OCI-LY7 (cell line): ENCODE measurements at regions of chr14 and their contacts with region 1.

Region 1: DNA sequence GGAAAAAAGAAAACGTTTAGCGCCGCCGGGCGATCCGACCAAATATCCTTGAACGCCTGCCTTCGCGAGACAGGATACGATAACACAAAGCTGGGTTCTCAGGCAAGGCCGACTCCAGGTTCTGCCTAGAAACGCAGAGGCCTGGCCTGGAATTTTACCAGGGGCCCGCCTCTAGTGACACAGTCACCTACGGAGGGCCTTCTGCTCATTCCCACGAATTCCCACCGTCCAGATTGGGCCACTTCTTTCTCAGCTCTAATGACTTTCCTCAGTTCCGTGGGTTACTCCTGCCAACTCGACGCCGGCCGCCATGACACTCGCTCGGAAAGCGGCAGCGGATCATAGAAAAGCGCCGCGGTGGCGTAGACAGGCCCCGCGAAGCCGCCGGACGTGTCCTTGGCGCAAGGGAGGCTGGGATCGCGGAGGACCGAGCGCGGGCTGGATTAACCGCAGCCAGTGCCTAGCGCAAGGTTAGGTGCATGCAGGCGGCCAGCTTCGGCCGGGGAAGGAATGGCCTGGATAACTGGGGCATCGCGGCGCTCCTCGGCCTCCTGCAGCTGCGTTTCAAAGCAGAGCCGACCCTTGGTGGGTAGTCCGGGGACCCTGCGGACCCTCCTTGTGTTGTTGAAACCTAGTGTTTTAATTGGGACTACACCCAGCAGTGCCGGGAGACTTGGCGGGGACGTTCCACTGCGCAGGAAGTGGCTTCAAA is at the start of gene TRIP11:
- DNase-seq: peak; percentile 94
- H3K4me3 ChIP-seq: peak within 1 kb of the TSS; percentile 81
- H3K27ac ChIP-seq: peak within 1 kb of the TSS; percentile 72
- H3K4me1 ChIP-seq: peaks cover 25% of the 10 kb centered on the region
- CTCF ChIP-seq: no peak
- total RNA-seq, gene TRIP11: 11.8 and 15.1 TPM in 2 replicates

Region 2: GRCh38 chr14:91744068-91744483 is 295.8 kb before region 1 on chr14:
- CTCF ChIA-PET with region 1: no interaction called
- POLR2A ChIA-PET with region 1: no interaction called
- intact Hi-C with region 1: no loop called
- DNase-seq: no peak
- H3K4me3 ChIP-seq: no peak overlapping the region
- H3K27ac ChIP-seq: no peak overlapping the region
- H3K4me1 ChIP-seq: no peaks in the 10 kb centered on the region
- CTCF ChIP-seq: no peak

Region 3: DNA sequence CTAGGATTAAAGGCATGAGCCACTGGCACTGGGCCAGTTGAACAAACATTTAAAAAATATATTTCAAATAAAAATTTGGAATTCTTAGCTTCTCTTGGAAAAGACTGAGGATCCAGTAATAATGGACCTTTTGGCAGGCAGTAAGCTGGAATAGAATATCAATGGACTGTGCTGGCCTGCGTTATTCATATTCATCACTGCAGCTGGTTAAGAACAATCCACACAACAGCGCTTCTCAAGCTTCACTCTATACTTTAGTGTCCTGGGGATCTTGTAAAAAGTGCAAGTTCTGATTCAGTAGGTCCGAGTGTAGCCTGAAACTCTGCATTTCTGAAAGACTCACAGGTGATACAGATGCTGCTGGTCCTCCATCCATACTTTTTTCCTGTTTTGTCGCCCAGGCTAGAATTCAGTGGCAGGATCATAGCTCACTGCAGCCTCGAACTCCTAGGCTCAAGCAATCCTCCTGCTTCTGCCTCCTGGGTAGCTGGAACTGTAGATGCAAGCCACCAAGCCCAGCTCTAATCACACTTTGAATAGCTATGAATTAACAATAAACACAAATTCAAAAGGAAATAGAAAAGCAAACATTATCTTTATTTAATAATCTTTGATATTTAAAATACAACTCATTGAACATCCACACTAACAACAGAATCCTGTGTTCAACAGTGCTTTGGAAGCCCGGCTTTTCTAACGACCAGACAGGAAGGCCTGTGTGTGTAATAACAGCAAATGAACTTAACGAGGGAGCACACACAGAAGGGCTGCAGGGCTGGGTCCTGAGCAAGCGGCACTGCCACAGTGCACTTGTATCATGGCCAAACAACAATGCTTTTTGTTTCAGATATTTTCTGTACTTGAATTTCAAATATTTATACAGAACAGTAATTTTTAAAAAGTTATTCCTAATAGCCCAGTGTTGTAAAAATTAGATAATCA is 18.4 kb after region 1 on chr14:
- CTCF ChIA-PET with region 1: no interaction called
- POLR2A ChIA-PET with region 1: interaction called, 11 read pairs
- intact Hi-C with region 1: no loop called
- DNase-seq: no peak
- H3K4me3 ChIP-seq: no peak overlapping the region
- H3K27ac ChIP-seq: no peak overlapping the region
- H3K4me1 ChIP-seq: no peaks in the 10 kb centered on the region
- CTCF ChIP-seq: no peak